ENCODE measurements at regions of chr12 and their contacts with region 1.

Region 1: DNA sequence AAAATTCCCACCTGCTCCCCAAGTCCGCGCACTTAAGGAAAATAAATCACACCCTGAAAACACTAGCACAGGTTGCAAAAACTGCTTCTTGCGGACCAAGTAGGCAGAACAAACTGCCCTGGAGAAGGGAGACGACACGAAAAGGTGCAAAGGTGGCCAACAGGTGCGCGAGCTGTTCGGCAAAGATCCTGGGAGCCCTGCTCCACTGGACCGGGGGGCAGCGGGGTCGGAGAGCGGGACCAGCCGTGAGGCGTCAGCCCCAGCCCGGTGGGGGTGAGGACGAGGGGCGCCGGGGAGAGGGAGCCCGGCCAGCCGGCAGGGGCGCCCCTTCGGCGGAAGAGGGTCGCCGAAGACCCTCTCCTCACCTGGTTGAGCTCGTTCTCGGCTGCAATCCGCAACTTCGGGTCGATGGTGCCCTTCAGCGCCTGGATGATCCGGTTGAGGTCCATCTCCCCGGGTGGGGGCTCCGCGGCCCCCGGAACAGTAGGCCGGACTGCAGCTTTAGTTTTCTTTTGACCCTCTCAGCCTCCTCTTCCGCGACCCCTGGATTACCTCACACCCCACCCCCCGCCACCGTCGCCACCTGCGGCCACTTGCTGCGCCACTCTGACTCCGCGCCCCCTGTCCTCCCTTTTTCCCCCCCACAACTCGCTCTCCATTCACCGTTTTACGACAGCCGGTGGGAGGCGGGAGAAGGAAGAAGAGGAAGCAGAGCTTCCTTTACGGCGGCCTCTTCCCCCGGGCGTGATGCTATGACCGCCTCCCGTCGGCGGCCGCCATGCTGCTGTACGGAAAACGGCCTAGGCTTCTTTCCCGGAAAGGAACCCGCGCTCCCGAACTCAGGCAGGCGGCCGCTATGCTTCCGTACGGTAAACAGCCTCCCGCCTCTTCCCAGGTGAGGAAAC is at the start of gene IPO8:
- DNase-seq: peak; percentile 79 to 87 (median 81)
- H3K4me3 ChIP-seq: peak within 1 kb of the TSS; percentile 86 to 99
- H3K4me3 Mint-ChIP-seq: peak within 1 kb of the TSS; percentile 96 to 98 (median 98)
- H3K27ac ChIP-seq: peak within 1 kb of the TSS; percentile 63
- H3K27ac Mint-ChIP-seq: peak within 1 kb of the TSS; percentile 88 to 97 (median 95)
- H3K4me1 ChIP-seq: peaks cover 35% of the 10 kb centered on the region
- H3K4me1 Mint-ChIP-seq: peaks cover 29 to 49% (median 39%) of the 10 kb centered on the region in 4 donors
- H3K27me3 ChIP-seq: no peaks in the 10 kb centered on the region
- H3K27me3 Mint-ChIP-seq: no peaks in the 10 kb centered on the region
- total RNA-seq, gene IPO8: 50.2 to 60.5 TPM

Region 2: GRCh38 chr12:29380536-29381523 is 1314.6 kb before region 1 on chr12 and contains the start of gene ERGIC2:
- CTCF ChIA-PET with region 1: no interaction called
- POLR2A ChIA-PET with region 1: interaction called, 5 read pairs
- intact Hi-C with region 1: loop called (anchors 2 kb)
- DNase-seq: peak; percentile 93 to 96 (median 96)
- H3K4me3 ChIP-seq: peak within 1 kb of the TSS; percentile 92 to 100
- H3K4me3 Mint-ChIP-seq: peak within 1 kb of the TSS; percentile 89 to 98 (median 94)
- H3K27ac ChIP-seq: peak within 1 kb of the TSS; percentile 95
- H3K27ac Mint-ChIP-seq: peak within 1 kb of the TSS; percentile 94 to 99 (median 98)
- H3K4me1 ChIP-seq: peaks cover 27% of the 10 kb centered on the region
- H3K4me1 Mint-ChIP-seq: peaks cover 24 to 57% (median 46%) of the 10 kb centered on the region in 4 donors
- H3K27me3 ChIP-seq: no peaks in the 10 kb centered on the region
- H3K27me3 Mint-ChIP-seq: no peaks in the 10 kb centered on the region
- total RNA-seq, gene ERGIC2: 74.9 to 82.9 TPM

Region 3: DNA sequence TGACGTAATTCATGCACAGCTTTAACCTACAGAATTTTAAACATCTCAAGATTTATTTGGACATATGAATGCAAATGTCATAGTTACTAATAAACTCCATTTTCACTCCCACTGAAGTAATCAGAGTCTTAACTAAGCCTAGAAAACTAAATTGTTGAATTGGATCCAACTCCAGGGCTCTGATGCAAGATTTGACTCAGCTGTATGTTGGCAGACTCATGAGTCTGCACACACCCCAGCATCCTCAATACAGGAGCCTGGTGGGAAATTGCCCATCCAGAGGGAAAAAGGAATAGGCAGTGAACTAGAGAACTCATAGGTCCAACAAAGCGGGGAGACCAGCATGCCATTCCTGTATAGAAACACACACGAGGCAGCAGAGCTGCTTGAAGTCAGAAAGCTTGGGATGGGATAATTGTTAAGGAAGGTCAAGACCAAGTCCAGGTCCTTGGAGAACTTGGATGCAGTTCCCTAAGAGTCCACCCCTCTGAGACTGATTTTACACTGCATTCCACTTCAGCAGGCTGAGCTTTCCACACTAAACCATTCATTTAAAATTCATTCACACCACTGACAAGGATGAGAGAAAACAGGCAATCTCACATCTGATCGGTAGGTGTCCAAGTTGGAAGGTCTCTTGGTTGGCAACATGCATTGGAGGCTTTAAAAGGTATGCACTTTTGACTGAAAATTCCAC is 926.1 kb before region 1 on chr12:
- CTCF ChIA-PET with region 1: no interaction called
- POLR2A ChIA-PET with region 1: no interaction called
- intact Hi-C with region 1: no loop called
- DNase-seq: no peak
- H3K4me3 ChIP-seq: no peak overlapping the region
- H3K4me3 Mint-ChIP-seq: no peak overlapping the region
- H3K27ac ChIP-seq: no peak overlapping the region
- H3K27ac Mint-ChIP-seq: no peak overlapping the region
- H3K4me1 ChIP-seq: no peaks in the 10 kb centered on the region
- H3K4me1 Mint-ChIP-seq: no peaks in the 10 kb centered on the region
- H3K27me3 ChIP-seq: no peaks in the 10 kb centered on the region
- H3K27me3 Mint-ChIP-seq: no peaks in the 10 kb centered on the region

Region 4: GRCh38 chr12:30806989-30807694 is 111.7 kb after region 1 on chr12:
- CTCF ChIA-PET with region 1: interaction called, 4 read pairs
- POLR2A ChIA-PET with region 1: no interaction called
- intact Hi-C with region 1: loop called (anchors 1 kb)
- DNase-seq: peak in 4 of 5 donors; percentile 44 to 55 (median 53)
- H3K4me3 ChIP-seq: no peak overlapping the region
- H3K4me3 Mint-ChIP-seq: no peak overlapping the region
- H3K27ac ChIP-seq: no peak overlapping the region
- H3K27ac Mint-ChIP-seq: no peak overlapping the region
- H3K4me1 ChIP-seq: no peaks in the 10 kb centered on the region
- H3K4me1 Mint-ChIP-seq: no peaks in the 10 kb centered on the region
- H3K27me3 ChIP-seq: no peaks in the 10 kb centered on the region
- H3K27me3 Mint-ChIP-seq: peaks cover 11 to 12% of the 10 kb centered on the region in 2 donors

Region 5: DNA sequence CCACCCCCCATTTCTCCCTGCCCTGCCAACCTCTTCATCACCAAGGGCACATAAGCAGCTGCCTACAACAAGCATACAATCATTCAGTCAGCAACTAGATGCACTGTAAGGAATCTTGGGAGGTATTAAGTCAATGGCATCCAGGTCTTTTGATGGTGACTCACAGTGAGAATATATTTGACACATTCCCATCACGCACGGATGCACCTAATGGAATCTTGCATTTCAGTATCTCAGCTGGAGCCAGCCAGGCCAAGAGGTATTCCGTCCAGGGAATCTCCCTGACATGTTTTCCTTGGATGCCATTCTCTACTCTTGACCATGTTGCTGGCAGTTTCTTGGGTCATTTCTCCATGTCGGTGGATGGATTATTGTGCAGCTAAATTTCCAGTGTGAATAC is 133.2 kb after region 1 on chr12:
- CTCF ChIA-PET with region 1: no interaction called
- POLR2A ChIA-PET with region 1: no interaction called
- intact Hi-C with region 1: no loop called
- DNase-seq: no peak
- H3K4me3 ChIP-seq: no peak overlapping the region
- H3K4me3 Mint-ChIP-seq: no peak overlapping the region
- H3K27ac ChIP-seq: no peak overlapping the region
- H3K27ac Mint-ChIP-seq: no peak overlapping the region
- H3K4me1 ChIP-seq: peaks cover 1% of the 10 kb centered on the region
- H3K4me1 Mint-ChIP-seq: peaks cover 2 to 10% (median 4%) of the 10 kb centered on the region in 4 donors
- H3K27me3 ChIP-seq: no peaks in the 10 kb centered on the region
- H3K27me3 Mint-ChIP-seq: peaks cover 14 to 49% of the 10 kb centered on the region in 2 donors

Region 6: GRCh38 chr12:32679091-32679919 is 1983.9 kb after region 1 on chr12 and contains the start of gene DNM1L:
- CTCF ChIA-PET with region 1: interaction called, 4 read pairs
- POLR2A ChIA-PET with region 1: no interaction called
- intact Hi-C with region 1: loop called (anchors 10 kb)
- DNase-seq: peak; percentile 91 to 95 (median 93)
- H3K4me3 ChIP-seq: peak within 1 kb of the TSS; percentile 65 to 69
- H3K4me3 Mint-ChIP-seq: peak within 1 kb of the TSS; percentile 89 to 97 (median 94)
- H3K27ac ChIP-seq: peak within 1 kb of the TSS; percentile 87
- H3K27ac Mint-ChIP-seq: peak within 1 kb of the TSS; percentile 80 to 97 (median 94)
- H3K4me1 ChIP-seq: peaks cover 18% of the 10 kb centered on the region
- H3K4me1 Mint-ChIP-seq: peaks cover 14 to 37% (median 27%) of the 10 kb centered on the region in 4 donors
- H3K27me3 ChIP-seq: no peaks in the 10 kb centered on the region
- H3K27me3 Mint-ChIP-seq: no peaks in the 10 kb centered on the region
- total RNA-seq, gene DNM1L: 42.7 to 50.1 TPM